Activated CD4-positive, alpha-beta T cell treated with anti-CD3 and anti-CD28 coated beads, Interleukin-2, amount 10 ng/mL, durations not matched to agents 24 days and 14 days (primary cell): ENCODE measurements at regions of chr1 and their contacts with region 1.

Region 1: DNA sequence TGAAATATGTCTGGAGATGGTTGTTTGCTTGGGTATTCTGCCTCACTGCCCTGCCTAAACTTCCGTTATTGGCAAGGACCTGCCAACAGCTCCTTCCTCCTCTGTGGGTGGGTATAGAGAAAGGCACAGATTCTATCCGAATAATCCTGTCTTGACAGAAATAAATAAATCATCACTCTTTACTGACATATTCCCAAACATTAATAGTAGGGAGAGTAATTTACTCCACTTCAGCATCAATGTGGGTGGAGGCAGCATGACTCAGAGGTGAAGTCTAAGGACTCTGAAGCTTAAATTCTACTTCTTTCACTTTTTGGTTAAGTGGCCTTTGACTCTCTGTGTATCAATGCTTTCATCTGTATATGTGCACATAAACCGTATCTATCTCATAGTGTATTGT is 2.9 kb downstream of the CD84 start:
- DNase-seq: peak; percentile 75
- H3K4me3 Mint-ChIP-seq: peak overlapping the region; percentile 88
- H3K27ac Mint-ChIP-seq: peak overlapping the region; percentile 92
- H3K4me1 Mint-ChIP-seq: peaks cover 83% of the 10 kb centered on the region
- H3K27me3 Mint-ChIP-seq: no peaks in the 10 kb centered on the region

Region 2: GRCh38 chr1:160342953-160343869 is 233.2 kb before region 1 on chr1 and contains the starts of genes COPA and NCSTN:
- intact Hi-C with region 1: no loop called
- DNase-seq: peak; percentile 97
- H3K4me3 Mint-ChIP-seq: peak within 1 kb of the TSS; percentile 96
- H3K27ac Mint-ChIP-seq: peak within 1 kb of the TSS; percentile 97
- H3K4me1 Mint-ChIP-seq: peaks cover 41% of the 10 kb centered on the region
- H3K27me3 Mint-ChIP-seq: no peaks in the 10 kb centered on the region
- total RNA-seq, gene COPA: 116 and 125 TPM in 2 replicates
- total RNA-seq, gene NCSTN: 73.6 and 81.1 TPM in 2 replicates

Region 3: GRCh38 chr1:160460683-160461287 is 115.6 kb before region 1 on chr1:
- intact Hi-C with region 1: loop called (anchors 2 kb)
- DNase-seq: peak; percentile 72
- H3K4me3 Mint-ChIP-seq: peak overlapping the region; percentile 77
- H3K27ac Mint-ChIP-seq: peak overlapping the region; percentile 98
- H3K4me1 Mint-ChIP-seq: peaks cover 74% of the 10 kb centered on the region
- H3K27me3 Mint-ChIP-seq: no peaks in the 10 kb centered on the region

Region 4: GRCh38 chr1:160539990-160540858 is 36.2 kb before region 1 on chr1:
- intact Hi-C with region 1: loop called (anchors 1 kb)
- DNase-seq: peak; percentile 90
- H3K4me3 Mint-ChIP-seq: peak overlapping the region; percentile 72
- H3K27ac Mint-ChIP-seq: peak overlapping the region; percentile 91
- H3K4me1 Mint-ChIP-seq: peaks cover 45% of the 10 kb centered on the region
- H3K27me3 Mint-ChIP-seq: no peaks in the 10 kb centered on the region

Region 5: GRCh38 chr1:160558660-160559380 is 17.6 kb before region 1 on chr1:
- intact Hi-C with region 1: loop called (anchors 2 kb)
- DNase-seq: no peak
- H3K4me3 Mint-ChIP-seq: peak overlapping the region; percentile 73
- H3K27ac Mint-ChIP-seq: peak overlapping the region; percentile 78
- H3K4me1 Mint-ChIP-seq: peaks cover 46% of the 10 kb centered on the region
- H3K27me3 Mint-ChIP-seq: no peaks in the 10 kb centered on the region

Region 6: GRCh38 chr1:160623227-160623633 is 46.8 kb after region 1 on chr1:
- intact Hi-C with region 1: loop called (anchors 2 kb)
- DNase-seq: peak; percentile 78
- H3K4me3 Mint-ChIP-seq: peak overlapping the region; percentile 75
- H3K27ac Mint-ChIP-seq: peak overlapping the region; percentile 99
- H3K4me1 Mint-ChIP-seq: peaks cover 83% of the 10 kb centered on the region
- H3K27me3 Mint-ChIP-seq: no peaks in the 10 kb centered on the region

Region 7: DNA sequence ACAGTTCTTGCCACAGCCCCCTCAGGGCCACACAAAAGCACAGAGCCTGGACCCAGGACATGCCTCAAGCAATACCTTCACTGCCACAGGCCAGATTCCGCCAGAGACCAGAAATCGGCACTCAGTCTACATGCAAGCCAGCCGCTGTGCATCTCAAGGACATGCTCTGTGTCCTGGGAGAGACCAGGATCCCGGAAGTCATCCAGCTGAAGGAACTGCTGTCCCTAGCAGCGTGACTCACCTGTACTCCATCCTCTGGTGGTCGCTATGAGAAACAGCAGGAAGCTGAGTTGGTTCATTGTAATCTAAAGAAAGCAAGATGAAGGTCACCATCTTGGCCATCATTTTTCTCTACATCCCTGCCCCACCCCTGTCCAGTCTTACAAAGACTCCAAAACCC is 308.2 kb after region 1 on chr1:
- intact Hi-C with region 1: no loop called
- DNase-seq: peak; percentile 76
- H3K4me3 Mint-ChIP-seq: no peak overlapping the region
- H3K27ac Mint-ChIP-seq: no peak overlapping the region
- H3K4me1 Mint-ChIP-seq: peaks cover 5% of the 10 kb centered on the region
- H3K27me3 Mint-ChIP-seq: peaks cover 9% of the 10 kb centered on the region